ENCODE measurements at regions of chrX and their contacts with region 1.

Region 1: DNA sequence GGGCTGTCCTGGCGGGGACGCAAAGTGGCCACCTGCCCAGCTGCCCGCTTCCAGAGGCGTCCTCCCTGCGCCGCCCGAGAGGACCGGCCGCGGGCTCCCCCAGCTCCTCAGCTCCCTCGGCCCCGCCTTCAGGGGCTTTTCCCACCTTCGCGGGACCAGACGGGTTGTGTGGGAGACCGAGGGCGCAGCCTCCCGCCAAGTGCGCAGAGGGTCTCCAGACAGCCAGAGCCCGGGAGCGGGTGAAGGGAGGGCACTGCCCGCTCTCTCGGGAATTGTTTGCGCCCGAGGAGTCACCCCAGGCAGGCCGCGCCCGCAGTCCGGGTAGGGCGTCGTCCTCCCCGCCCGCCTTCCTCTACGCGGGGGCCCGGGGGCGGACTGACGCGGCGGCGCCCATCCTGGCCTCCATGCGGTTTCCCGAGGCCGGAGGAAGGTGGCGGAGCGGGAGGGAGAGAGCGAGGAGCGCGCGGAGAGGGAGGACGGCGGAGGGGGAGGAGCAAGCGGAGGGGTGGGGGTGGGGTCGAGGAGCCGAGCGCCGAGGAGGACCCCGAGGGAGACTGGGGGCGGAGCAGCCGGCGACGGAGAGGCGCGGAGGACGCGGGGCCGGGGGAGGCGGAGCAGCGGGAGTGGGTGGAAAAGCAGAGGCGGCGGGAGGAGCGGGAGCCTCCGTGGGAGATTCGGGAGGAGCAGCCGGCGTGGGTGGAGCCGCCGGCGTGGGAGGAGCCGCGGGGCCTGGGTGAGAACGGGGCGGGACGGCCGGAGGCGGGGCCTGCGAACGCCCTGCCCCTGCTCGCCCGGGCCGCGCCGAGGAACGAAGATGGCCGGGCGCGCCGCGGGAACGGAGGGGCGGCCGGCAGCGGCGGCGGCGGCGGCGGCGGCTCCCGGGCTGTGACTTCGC is 47.6 kb downstream of the CLDN34 start:
- DNase-seq: peak; percentile 74
- H3K4me3 Mint-ChIP-seq: peak overlapping the region; percentile 66
- H3K27ac Mint-ChIP-seq: peak overlapping the region; percentile 73
- H3K4me1 Mint-ChIP-seq: peaks cover 46% of the 10 kb centered on the region
- H3K27me3 Mint-ChIP-seq: peaks cover 4% of the 10 kb centered on the region

Region 2: GRCh38 chrX:9745417-9746115 is 269.1 kb before region 1 on chrX:
- intact Hi-C with region 1: no loop called
- DNase-seq: no peak
- H3K4me3 Mint-ChIP-seq: peak overlapping the region; percentile 8
- H3K27ac Mint-ChIP-seq: no peak overlapping the region
- H3K4me1 Mint-ChIP-seq: peaks cover 11% of the 10 kb centered on the region
- H3K27me3 Mint-ChIP-seq: no peaks in the 10 kb centered on the region

Region 3: DNA sequence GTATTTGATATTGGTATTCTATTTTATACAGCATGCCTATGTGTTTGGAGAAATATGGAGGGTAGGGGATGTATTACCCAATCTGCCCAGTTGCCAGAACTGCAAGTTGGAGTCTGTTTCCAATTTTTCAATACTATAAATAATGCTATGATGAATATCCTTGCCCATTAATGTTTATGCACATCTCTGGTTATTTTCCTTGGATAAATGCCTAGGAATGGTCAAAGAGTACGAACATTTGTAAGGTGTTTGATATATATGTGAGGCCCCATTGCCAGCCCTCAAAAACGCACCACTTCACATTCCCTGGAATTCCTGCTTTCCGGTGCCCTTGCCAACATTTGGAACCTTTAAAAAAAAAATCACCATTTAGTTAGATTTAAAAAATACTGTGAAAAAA is 13.2 kb before region 1 on chrX:
- intact Hi-C with region 1: loop called (anchors 1 kb)
- DNase-seq: no peak
- H3K4me3 Mint-ChIP-seq: no peak overlapping the region
- H3K27ac Mint-ChIP-seq: no peak overlapping the region
- H3K4me1 Mint-ChIP-seq: peaks cover 35% of the 10 kb centered on the region
- H3K27me3 Mint-ChIP-seq: no peaks in the 10 kb centered on the region

Measured in activated T-helper 2 cell treated with anti-CD3 and anti-CD28 coated beads, Interferon-gamma antibody, Interleukin-2, Interleukin-4, amounts not matched to agents 10 μg/mL and 5 μg/mL and 100 μg/mL, durations not matched to agents 14 hours and 24 hours and 36 hours (primary cell).